BJ (cell line): ENCODE measurements at regions of chr2 and their contacts with region 1.

Region 1: GRCh38 chr2:172465417-172466334 is 38.3 kb downstream of the ITGA6 start:
- DNase-seq: peak; percentile 38
- H3K4me3 ChIP-seq: peak overlapping the region; percentile 33
- H3K27me3 ChIP-seq: no peaks in the 10 kb centered on the region
- CTCF ChIP-seq: peak; percentile 82

Region 2: GRCh38 chr2:172153156-172153555 is 312.5 kb before region 1 on chr2:
- CTCF ChIA-PET with region 1: interaction called, 14 read pairs
- POLR2A ChIA-PET with region 1: no interaction called
- DNase-seq: no peak
- H3K4me3 ChIP-seq: no peak overlapping the region
- H3K27me3 ChIP-seq: peaks cover 12% of the 10 kb centered on the region
- CTCF ChIP-seq: no peak

Region 3: GRCh38 chr2:172179045-172179701 is 286.5 kb before region 1 on chr2:
- CTCF ChIA-PET with region 1: interaction called, 263 read pairs
- POLR2A ChIA-PET with region 1: no interaction called
- DNase-seq: no peak
- H3K4me3 ChIP-seq: no peak overlapping the region
- H3K27me3 ChIP-seq: no peaks in the 10 kb centered on the region
- CTCF ChIP-seq: no peak

Region 4: GRCh38 chr2:172230889-172231401 is 234.7 kb before region 1 on chr2:
- CTCF ChIA-PET with region 1: interaction called, 17 read pairs
- POLR2A ChIA-PET with region 1: no interaction called
- DNase-seq: no peak
- H3K4me3 ChIP-seq: no peak overlapping the region
- H3K27me3 ChIP-seq: no peaks in the 10 kb centered on the region
- CTCF ChIP-seq: no peak

Region 5: GRCh38 chr2:172427256-172427989 is 38.3 kb before region 1 on chr2 and contains the start of gene ITGA6:
- CTCF ChIA-PET with region 1: interaction called, 24 read pairs
- POLR2A ChIA-PET with region 1: no interaction called
- DNase-seq: no peak
- H3K4me3 ChIP-seq: peak within 1 kb of the TSS; percentile 74
- H3K27me3 ChIP-seq: peaks cover 2% of the 10 kb centered on the region
- CTCF ChIP-seq: peak; percentile 24; the same call in 1 of the 2 replicates
- polyA plus RNA-seq, gene ITGA6: 2.9 and 5.6 TPM in 2 replicates

Region 6: DNA sequence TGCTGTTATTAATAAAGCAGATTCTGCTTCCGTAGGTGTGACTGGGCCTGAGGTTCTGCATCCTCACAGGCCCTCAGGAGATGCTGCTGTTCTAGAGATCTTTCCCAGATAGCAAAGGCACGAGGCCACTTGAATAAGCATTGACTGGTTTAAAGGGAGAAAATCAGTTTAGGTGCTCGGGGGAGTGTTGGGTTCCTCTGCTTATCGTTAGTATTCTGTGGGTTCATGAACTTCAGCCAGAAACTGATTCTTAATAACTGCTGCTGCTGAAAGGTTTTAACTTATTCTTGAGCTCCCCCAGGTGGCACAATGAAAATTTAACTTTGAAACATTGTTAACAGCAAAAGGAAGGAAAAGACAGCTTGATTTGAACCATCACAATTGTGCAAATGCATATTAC is 18.6 kb after region 1 on chr2:
- CTCF ChIA-PET with region 1: interaction called, 30 read pairs
- POLR2A ChIA-PET with region 1: no interaction called
- DNase-seq: no peak
- H3K4me3 ChIP-seq: no peak overlapping the region
- H3K27me3 ChIP-seq: no peaks in the 10 kb centered on the region
- CTCF ChIP-seq: peak; percentile 41